WTC11 (cell line): ENCODE measurements at regions of chr10 and their contacts with region 1.

Region 1: DNA sequence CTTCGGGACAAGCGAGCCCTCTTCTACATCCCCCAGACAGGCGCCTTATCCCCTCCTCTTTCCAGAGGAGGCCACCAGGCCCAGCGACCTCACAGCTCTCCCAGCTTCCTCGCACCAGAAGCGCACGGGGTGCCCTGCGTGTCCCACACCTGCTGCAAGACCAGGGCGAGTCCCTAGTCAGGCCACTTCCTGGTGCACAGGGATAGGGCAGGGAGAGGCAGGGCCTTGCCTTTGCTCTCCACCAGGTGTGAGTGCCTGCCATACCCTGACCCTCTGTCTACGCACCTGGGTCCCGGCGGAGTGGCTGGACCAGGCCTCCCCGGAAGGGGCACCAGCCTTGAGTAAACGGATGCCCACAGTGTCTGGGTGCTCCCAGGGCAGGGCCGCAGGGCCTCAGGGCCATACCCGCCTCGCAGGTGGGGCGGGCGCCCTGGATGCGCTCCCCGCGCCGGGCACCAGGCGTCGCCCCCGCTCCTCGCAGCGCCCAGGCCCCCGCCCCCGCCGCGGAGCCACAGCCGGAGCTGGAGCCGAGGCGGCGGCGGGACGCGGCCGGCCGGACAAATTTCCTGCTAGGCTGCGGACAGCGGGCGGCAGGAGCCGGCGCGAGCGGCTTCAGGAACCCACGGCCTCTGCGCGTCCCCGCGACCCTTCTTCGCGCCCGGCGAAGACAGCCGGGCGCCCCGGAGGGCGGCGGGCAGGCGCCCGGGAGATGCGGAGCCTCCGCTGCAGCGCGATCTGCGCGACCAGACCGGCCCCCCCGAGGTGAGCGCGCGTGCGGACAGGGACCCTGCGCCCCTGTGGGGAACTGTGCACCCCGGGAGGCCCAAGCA is at the start of gene PTPRE:
- DNase-seq: peak; percentile 76
- ATAC-seq: peak; percentile 94
- H3K4me3 Mint-ChIP-seq: peak within 1 kb of the TSS; percentile 52
- H3K27ac Mint-ChIP-seq: no peak within 1 kb of the TSS
- H3K4me1 Mint-ChIP-seq: peaks cover 3% of the 10 kb centered on the region
- H3K27me3 Mint-ChIP-seq: peaks cover 23% of the 10 kb centered on the region
- CTCF ChIP-seq: peak; percentile 65; the same call in 1 of the 2 replicates
- total RNA-seq, gene PTPRE: 1.7 to 3.1 TPM (median 2.0 TPM) in 3 replicates

Region 2: GRCh38 chr10:127781412-127781811 is 125.4 kb before region 1 on chr10:
- CTCF ChIA-PET with region 1: no interaction called
- POLR2A ChIA-PET with region 1: no interaction called
- DNase-seq: no peak
- ATAC-seq: no peak
- H3K4me3 Mint-ChIP-seq: no peak overlapping the region
- H3K27ac Mint-ChIP-seq: no peak overlapping the region
- H3K4me1 Mint-ChIP-seq: no peaks in the 10 kb centered on the region
- H3K27me3 Mint-ChIP-seq: no peaks in the 10 kb centered on the region
- CTCF ChIP-seq: no peak

Region 3: DNA sequence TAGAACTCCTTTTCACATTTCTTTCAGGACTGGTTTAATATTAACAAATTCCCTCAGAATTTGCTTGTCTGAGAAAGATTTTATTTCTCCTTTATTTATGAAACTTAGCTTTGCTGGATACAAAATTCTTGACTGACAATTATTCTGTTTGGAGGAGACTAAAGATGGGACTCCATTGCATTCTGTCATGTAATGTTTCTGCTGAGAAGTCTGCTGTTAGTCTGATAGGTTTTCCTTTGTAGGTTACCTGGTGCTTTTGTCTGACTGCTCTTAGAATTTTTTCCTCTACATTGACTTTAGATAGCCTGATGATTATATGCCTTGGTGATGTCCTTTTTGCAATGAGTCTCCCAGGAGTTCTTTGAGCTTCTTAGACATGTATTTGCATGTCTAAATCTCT is 37.4 kb before region 1 on chr10:
- CTCF ChIA-PET with region 1: interaction called, 11 read pairs
- POLR2A ChIA-PET with region 1: no interaction called
- DNase-seq: no peak
- ATAC-seq: no peak
- H3K4me3 Mint-ChIP-seq: no peak overlapping the region
- H3K27ac Mint-ChIP-seq: no peak overlapping the region
- H3K4me1 Mint-ChIP-seq: no peaks in the 10 kb centered on the region
- H3K27me3 Mint-ChIP-seq: no peaks in the 10 kb centered on the region; the same call in 1 of the 2 replicates
- CTCF ChIP-seq: no peak

Region 4: DNA sequence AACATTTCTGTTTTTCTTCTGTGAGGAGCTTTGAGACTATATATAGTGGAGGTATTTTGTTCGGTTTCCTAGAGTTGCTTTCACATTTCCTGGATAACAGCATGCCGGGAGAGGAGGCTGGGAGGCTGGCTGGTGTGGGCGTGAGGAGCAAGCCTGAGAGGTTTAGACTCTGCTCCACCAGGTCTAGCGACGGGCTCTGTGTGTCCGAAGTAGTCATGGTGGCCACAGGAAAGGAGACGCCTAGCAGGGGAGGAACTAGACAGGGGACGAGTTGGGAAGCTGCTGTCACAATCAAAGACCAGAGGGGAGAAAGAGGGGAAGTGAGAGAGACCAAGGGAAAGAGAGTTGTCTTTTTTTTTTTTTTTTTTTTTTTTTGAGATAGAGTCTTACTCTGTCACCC is 19.7 kb after region 1 on chr10:
- CTCF ChIA-PET with region 1: interaction called, 11 read pairs
- POLR2A ChIA-PET with region 1: no interaction called
- DNase-seq: no peak
- ATAC-seq: no peak
- H3K4me3 Mint-ChIP-seq: no peak overlapping the region
- H3K27ac Mint-ChIP-seq: no peak overlapping the region
- H3K4me1 Mint-ChIP-seq: peaks cover 6% of the 10 kb centered on the region; the same call in 1 of the 2 replicates
- H3K27me3 Mint-ChIP-seq: no peaks in the 10 kb centered on the region
- CTCF ChIP-seq: no peak

Region 5: DNA sequence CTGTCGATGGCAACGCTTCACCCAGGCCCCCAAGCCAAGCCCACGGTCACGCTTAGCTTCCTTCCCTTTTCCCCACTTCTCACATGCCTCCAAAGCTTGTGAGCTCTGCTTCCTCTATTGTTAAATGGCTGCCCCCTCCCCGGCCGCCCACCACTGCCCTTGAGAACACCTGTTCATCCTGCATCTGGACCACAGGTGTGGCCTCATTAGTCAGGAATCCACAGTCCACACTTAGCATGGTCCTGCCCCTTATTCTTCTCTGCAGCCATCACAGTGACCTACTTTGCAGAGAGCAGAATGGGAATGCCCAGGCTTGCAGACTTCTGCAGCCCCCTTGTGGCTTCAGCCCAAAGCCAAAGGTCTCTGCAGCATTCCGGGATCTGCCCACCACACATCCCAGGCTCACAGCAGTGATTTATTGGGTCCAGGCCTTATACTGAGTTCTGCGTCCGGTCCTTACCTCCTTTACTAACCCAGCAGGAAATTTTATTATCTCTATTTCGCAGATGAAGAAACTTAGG is 67.1 kb after region 1 on chr10:
- CTCF ChIA-PET with region 1: interaction called, 20 read pairs
- POLR2A ChIA-PET with region 1: no interaction called
- DNase-seq: peak; percentile 32
- ATAC-seq: peak; percentile 96
- H3K4me3 Mint-ChIP-seq: no peak overlapping the region
- H3K27ac Mint-ChIP-seq: no peak overlapping the region
- H3K4me1 Mint-ChIP-seq: peaks cover 29% of the 10 kb centered on the region
- H3K27me3 Mint-ChIP-seq: no peaks in the 10 kb centered on the region
- CTCF ChIP-seq: no peak